ENCODE measurements at regions of chr17 and their contacts with region 1.

Region 1: DNA sequence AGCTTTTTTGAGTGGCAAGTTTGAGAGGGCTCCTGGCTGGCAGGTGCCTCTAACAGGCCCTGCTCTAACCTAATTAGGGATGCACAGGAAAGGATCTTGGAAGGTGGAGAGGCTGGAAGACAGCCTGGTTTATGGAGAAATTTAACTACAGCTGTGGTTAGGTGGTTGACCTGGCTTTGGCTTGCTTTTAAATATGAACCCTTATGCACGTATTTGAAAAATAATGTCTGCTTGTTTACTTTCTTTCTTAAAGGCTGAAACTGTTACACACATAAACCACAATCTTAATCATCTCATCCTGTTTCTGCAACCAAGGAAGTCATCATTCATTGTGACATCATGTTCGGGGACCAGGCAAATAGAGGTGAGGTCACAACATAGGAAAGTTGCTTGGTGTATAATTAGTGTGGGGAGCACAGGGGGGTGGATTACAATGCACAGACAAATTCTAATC is 23.1 kb upstream of the DHRS13 start:
- DNase-seq: peak; percentile 59
- H3K4me3 Mint-ChIP-seq: peak overlapping the region; percentile 26
- H3K27ac Mint-ChIP-seq: peak overlapping the region; percentile 73
- H3K4me1 Mint-ChIP-seq: peaks cover 49% of the 10 kb centered on the region
- H3K27me3 Mint-ChIP-seq: no peaks in the 10 kb centered on the region

Region 2: GRCh38 chr17:28889996-28890395 is 35.9 kb before region 1 on chr17:
- intact Hi-C with region 1: loop called (anchors 5 kb)
- DNase-seq: no peak
- H3K4me3 Mint-ChIP-seq: no peak overlapping the region
- H3K27ac Mint-ChIP-seq: peak overlapping the region; percentile 13
- H3K4me1 Mint-ChIP-seq: peaks cover 39% of the 10 kb centered on the region
- H3K27me3 Mint-ChIP-seq: no peaks in the 10 kb centered on the region

Region 3: DNA sequence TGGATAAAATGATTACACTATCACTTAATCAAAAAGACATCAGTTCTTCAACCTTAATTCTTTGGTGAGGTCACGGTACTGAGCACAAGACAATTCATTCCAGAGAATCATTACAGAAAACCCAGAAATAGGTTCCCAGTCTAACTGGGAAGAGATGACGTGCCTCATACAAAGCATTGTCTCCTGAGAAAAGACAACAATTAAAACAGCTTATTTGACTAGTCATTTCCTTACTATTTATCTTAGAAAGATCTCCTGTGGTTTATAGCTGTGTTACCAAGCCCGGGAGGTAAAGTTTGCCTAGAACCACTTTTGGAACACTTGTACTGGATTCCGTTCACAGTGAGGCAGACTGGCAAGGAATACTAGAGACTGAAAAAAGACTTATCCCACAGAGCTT is 20.3 kb after region 1 on chr17:
- intact Hi-C with region 1: loop called (anchors 1 kb)
- DNase-seq: no peak
- H3K4me3 Mint-ChIP-seq: peak overlapping the region; percentile 62
- H3K27ac Mint-ChIP-seq: peak overlapping the region; percentile 89
- H3K4me1 Mint-ChIP-seq: peaks cover 42% of the 10 kb centered on the region
- H3K27me3 Mint-ChIP-seq: no peaks in the 10 kb centered on the region

Region 4: DNA sequence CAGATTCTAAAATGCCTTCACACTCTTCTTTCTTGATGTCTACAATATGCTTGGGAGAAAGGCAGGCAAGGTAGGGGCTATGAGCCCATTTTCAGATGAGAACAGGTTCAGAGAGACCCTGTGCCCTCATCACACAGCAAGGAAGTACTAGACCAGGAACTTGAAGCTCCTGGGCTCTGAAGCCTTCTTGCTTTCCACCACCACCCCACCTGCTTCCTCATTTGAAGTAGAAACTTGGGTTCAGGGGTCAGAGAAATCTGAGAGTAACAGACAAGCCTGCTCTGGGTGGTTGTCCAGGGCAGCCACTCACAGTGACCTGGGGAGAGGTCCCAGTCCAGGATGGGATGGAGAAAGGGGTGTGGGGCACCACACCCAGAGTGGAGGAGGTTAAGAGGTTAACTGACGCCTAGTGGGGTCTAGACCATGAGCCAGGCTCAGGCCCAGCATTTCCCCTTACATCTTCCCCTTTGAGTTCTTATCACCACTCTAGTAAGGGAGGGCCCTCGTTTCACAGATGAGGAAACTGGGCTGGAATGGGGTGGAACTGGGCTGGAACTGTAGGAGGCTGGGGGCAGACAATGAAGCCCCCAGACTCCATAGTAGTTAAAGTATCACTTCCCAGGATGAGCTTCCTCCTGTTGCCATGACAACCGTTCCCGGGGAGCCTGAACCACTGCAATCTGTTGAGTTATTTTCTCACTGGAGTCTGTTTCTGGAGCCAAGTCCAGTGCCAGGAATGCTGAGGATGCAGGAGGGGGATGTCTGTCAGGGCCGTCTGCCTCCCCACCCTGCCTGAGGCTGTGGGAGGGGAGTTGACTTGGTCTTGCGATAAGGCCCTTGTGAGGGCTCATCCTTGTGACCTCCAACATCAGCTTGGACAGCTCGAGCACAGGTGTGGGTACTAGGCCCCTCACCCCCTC is 41.5 kb after region 1 on chr17:
- intact Hi-C with region 1: no loop called
- DNase-seq: no peak
- H3K4me3 Mint-ChIP-seq: no peak overlapping the region
- H3K27ac Mint-ChIP-seq: no peak overlapping the region
- H3K4me1 Mint-ChIP-seq: no peaks in the 10 kb centered on the region
- H3K27me3 Mint-ChIP-seq: peaks cover 14% of the 10 kb centered on the region

Measured in activated T-helper 2 cell treated with anti-CD3 and anti-CD28 coated beads, Interferon-gamma antibody, Interleukin-2, Interleukin-4, amounts not matched to agents 10 μg/mL and 5 μg/mL and 100 μg/mL, durations not matched to agents 14 hours and 24 hours and 36 hours (primary cell).